GM18951 (cell line): ENCODE measurements at regions of chr14 and their contacts with region 1.

Region 1: DNA sequence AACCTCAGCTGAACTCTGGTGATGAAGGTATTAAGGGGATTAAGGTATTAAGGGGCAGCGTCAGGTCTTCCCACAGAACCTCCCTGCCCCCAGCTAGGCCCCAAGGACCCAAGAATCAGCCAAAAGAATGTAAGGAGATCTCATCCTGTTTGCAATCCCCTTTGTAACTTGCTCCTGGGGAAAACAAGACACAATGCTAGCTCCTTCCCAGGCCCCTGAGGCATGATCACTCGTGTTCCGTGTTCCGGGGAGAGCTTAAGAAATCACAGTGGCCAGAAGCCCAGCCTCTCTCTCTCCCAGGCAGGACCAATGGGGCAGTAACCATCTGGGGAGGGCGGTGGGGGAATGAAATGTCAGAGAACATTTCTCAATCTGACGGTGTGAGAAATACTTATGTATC is 33.2 kb downstream of the PIGH start:
- POLR2A ChIP-seq: no peak

Region 2: GRCh38 chr14:67426983-67427606 is 139.8 kb before region 1 on chr14:
- in situ Hi-C with region 1: loop called (anchors 5 kb)
- POLR2A ChIP-seq: no peak

Region 3: GRCh38 chr14:67493092-67493717 is 73.7 kb before region 1 on chr14:
- in situ Hi-C with region 1: no loop called
- POLR2A ChIP-seq: no peak

Region 4: DNA sequence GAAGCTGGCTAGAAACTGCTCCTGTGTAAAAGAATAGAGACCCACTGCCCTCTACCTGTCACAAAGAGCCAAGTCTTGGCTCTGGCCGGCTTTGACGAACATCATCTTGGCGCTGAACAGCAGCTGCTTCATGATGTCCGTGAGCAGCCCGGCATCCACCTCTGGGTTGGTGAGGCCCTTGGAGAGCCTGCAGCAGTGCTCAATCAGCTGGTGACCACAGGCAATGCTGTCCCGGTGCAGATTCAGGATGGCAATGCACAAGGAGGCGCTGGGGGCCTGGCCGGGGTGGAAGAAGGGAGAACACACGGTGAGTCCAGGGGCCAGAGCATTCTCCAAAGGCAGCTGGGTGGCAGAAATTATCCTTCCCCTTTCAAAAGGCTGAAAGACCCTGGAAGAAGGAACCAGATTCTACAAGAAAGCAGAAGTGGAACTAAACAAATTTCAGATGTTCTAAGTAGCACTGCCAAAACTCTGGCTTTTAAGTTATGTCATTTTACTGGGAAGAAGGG is 199.3 kb after region 1 on chr14:
- in situ Hi-C with region 1: no loop called
- POLR2A ChIP-seq: no peak